CD4-positive, alpha-beta T cell (primary cell): ENCODE measurements at regions of chr22 and their contacts with region 1.

Region 1: DNA sequence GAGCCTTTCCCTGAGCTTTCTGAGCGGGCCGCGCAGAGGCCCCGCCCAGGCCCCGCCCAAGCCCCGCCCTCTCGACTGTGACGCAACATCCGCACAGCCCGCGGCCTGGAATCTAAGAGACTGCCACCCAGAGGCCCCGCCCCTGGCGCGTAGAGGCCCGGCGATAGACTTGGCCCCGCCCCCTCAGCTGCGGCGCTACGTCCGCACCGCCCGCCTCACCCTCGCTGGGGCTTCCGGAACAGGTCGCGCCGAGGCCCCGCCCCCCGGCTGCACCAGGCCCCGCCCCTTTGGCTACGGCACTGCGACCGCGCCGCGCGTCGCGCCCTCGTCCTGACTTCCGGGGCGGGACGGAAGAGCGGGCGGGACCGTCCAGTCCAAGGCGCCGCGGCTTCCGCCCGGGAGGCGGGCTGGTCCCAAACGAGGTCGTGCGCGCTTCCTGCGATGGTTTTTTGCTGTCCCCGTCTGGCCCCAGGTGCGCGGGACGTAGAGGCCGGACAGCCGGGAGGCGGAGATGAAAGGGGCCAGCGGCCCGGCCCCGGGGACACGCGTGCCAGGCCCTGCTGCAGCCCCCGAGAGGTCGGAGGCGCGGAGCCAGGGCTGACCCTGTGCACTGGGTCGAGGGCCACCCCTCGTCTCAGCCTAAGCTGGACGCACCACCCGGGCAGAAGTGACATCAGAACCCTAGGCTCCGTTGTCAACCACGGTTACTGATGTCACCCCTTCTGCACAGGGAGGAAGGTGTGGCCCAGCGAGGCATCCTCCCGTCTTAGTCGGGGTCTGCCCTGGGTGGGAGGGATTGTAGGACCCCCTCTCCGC is 59.0 kb upstream of the WNT7B start:
- DNase-seq: peak; percentile 99 to 100 (median 100)
- ATAC-seq: peak; percentile 88
- H3K4me3 ChIP-seq: peak overlapping the region; percentile 83
- H3K4me3 Mint-ChIP-seq: peak overlapping the region; percentile 92
- H3K27ac ChIP-seq: peak overlapping the region; percentile 97 to 99
- H3K27ac Mint-ChIP-seq: peak overlapping the region; percentile 98
- H3K4me1 ChIP-seq: peaks cover 14% of the 10 kb centered on the region
- H3K4me1 Mint-ChIP-seq: peaks cover 26% of the 10 kb centered on the region
- H3K27me3 ChIP-seq: no peaks in the 10 kb centered on the region
- H3K27me3 Mint-ChIP-seq: no peaks in the 10 kb centered on the region
- CTCF ChIP-seq: no peak

Region 2: GRCh38 chr22:46006379-46007002 is 29.5 kb before region 1 on chr22:
- CTCF ChIA-PET with region 1: interaction called, 60 read pairs
- POLR2A ChIA-PET with region 1: interaction called, 105 read pairs
- intact Hi-C with region 1: loop called in 1 of 2 experiments (anchors 1 kb)
- DNase-seq: peak; percentile 79 to 94 (median 89)
- ATAC-seq: peak; percentile 94
- H3K4me3 ChIP-seq: no peak overlapping the region
- H3K4me3 Mint-ChIP-seq: no peak overlapping the region
- H3K27ac ChIP-seq: no peak overlapping the region
- H3K27ac Mint-ChIP-seq: no peak overlapping the region
- H3K4me1 ChIP-seq: peaks cover 16% of the 10 kb centered on the region
- H3K4me1 Mint-ChIP-seq: peaks cover 4% of the 10 kb centered on the region
- H3K27me3 ChIP-seq: peaks cover 0 to 4% of the 10 kb centered on the region in 2 experiments
- H3K27me3 Mint-ChIP-seq: peaks cover 4% of the 10 kb centered on the region
- CTCF ChIP-seq: peak; percentile 95

Region 3: GRCh38 chr22:46057762-46058420 is 21.9 kb after region 1 on chr22:
- CTCF ChIA-PET with region 1: interaction called, 10 read pairs
- POLR2A ChIA-PET with region 1: interaction called, 102 read pairs
- intact Hi-C with region 1: loop called (anchors 1 to 2 kb)
- DNase-seq: peak in 6 of 14 experiments; percentile 17 to 80 (median 54)
- ATAC-seq: peak; percentile 69
- H3K4me3 ChIP-seq: no peak overlapping the region
- H3K4me3 Mint-ChIP-seq: peak overlapping the region; percentile 82
- H3K27ac ChIP-seq: peak overlapping the region in 1 of 2 donors; percentile 24
- H3K27ac Mint-ChIP-seq: peak overlapping the region; percentile 92
- H3K4me1 ChIP-seq: peaks cover 52% of the 10 kb centered on the region
- H3K4me1 Mint-ChIP-seq: peaks cover 42% of the 10 kb centered on the region
- H3K27me3 ChIP-seq: no peaks in the 10 kb centered on the region
- H3K27me3 Mint-ChIP-seq: no peaks in the 10 kb centered on the region
- CTCF ChIP-seq: no peak

Region 4: GRCh38 chr22:46076651-46077339 is 40.8 kb after region 1 on chr22:
- CTCF ChIA-PET with region 1: interaction called, 6 read pairs
- POLR2A ChIA-PET with region 1: interaction called, 10 read pairs
- intact Hi-C with region 1: loop called (anchors 2 kb)
- DNase-seq: peak in 1 of 14 experiments; percentile 23
- ATAC-seq: no peak
- H3K4me3 ChIP-seq: no peak overlapping the region
- H3K4me3 Mint-ChIP-seq: no peak overlapping the region
- H3K27ac ChIP-seq: no peak overlapping the region
- H3K27ac Mint-ChIP-seq: no peak overlapping the region
- H3K4me1 ChIP-seq: peaks cover 37% of the 10 kb centered on the region
- H3K4me1 Mint-ChIP-seq: peaks cover 29% of the 10 kb centered on the region
- H3K27me3 ChIP-seq: no peaks in the 10 kb centered on the region
- H3K27me3 Mint-ChIP-seq: no peaks in the 10 kb centered on the region
- CTCF ChIP-seq: no peak

Region 5: GRCh38 chr22:46150034-46150654 is 114.2 kb after region 1 on chr22 and contains the start of gene PPARA:
- CTCF ChIA-PET with region 1: no interaction called
- POLR2A ChIA-PET with region 1: interaction called, 11 read pairs
- intact Hi-C with region 1: loop called in 1 of 2 experiments (anchors 1 kb)
- DNase-seq: peak; percentile 63 to 96 (median 88)
- ATAC-seq: peak; percentile 75
- H3K4me3 ChIP-seq: peak within 1 kb of the TSS; percentile 87
- H3K4me3 Mint-ChIP-seq: peak within 1 kb of the TSS; percentile 89
- H3K27ac ChIP-seq: peak within 1 kb of the TSS; percentile 21 to 58
- H3K27ac Mint-ChIP-seq: peak within 1 kb of the TSS; percentile 74
- H3K4me1 ChIP-seq: peaks cover 32% of the 10 kb centered on the region
- H3K4me1 Mint-ChIP-seq: peaks cover 14% of the 10 kb centered on the region
- H3K27me3 ChIP-seq: no peaks in the 10 kb centered on the region
- H3K27me3 Mint-ChIP-seq: no peaks in the 10 kb centered on the region
- CTCF ChIP-seq: no peak
- total RNA-seq, gene PPARA: 9.1 to 9.3 TPM

Region 6: GRCh38 chr22:46296257-46297150 is 260.6 kb after region 1 on chr22 and contains the start of gene GTSE1:
- CTCF ChIA-PET with region 1: no interaction called
- POLR2A ChIA-PET with region 1: interaction called, 6 read pairs
- intact Hi-C with region 1: loop called in 1 of 2 experiments (anchors 1 kb)
- DNase-seq: peak; percentile 93 to 99 (median 97)
- ATAC-seq: peak; percentile 98
- H3K4me3 ChIP-seq: peak within 1 kb of the TSS; percentile 77
- H3K4me3 Mint-ChIP-seq: peak within 1 kb of the TSS; percentile 90
- H3K27ac ChIP-seq: peak within 1 kb of the TSS; percentile 75 to 91
- H3K27ac Mint-ChIP-seq: peak within 1 kb of the TSS; percentile 91
- H3K4me1 ChIP-seq: peaks cover 23% of the 10 kb centered on the region
- H3K4me1 Mint-ChIP-seq: peaks cover 26% of the 10 kb centered on the region
- H3K27me3 ChIP-seq: no peaks in the 10 kb centered on the region
- H3K27me3 Mint-ChIP-seq: peaks cover 4% of the 10 kb centered on the region
- CTCF ChIP-seq: peak; percentile 21
- total RNA-seq, gene GTSE1: 0.14 to 0.89 TPM